CD8-positive, alpha-beta T cell (primary cell): ENCODE measurements at regions of chr3 and their contacts with region 1.

Region 1: DNA sequence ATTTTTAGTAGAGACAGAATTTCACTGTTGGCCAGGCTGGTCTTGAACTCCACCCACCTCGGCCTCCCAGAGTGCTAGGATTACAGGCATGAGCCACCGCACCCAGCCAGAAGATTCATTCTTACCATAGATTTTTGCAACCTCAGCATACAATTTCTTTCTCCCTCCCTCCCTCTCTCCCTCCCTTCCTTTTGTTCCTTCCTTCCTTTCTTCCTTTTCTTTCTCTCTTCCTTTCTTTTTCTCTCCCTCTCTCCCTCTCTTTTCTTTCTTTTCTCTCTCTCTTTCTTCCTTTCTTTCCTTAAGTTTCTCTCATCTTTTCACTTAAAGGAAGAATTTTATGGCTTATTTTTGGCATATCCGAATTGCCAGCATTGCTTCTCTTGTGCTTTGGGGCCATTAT is 58.0 kb downstream of the PRKAR2A start:
- DNase-seq: no peak
- ATAC-seq: no peak
- H3K4me3 ChIP-seq: no peak overlapping the region
- H3K4me3 Mint-ChIP-seq: no peak overlapping the region
- H3K27ac ChIP-seq: no peak overlapping the region
- H3K27ac Mint-ChIP-seq: no peak overlapping the region
- H3K4me1 ChIP-seq: peaks cover 9% of the 10 kb centered on the region
- H3K4me1 Mint-ChIP-seq: peaks cover 19% of the 10 kb centered on the region
- H3K27me3 ChIP-seq: no peaks in the 10 kb centered on the region
- H3K27me3 Mint-ChIP-seq: no peaks in the 10 kb centered on the region
- CTCF ChIP-seq: no peak

Region 2: GRCh38 chr3:48811524-48811923 is 21.9 kb after region 1 on chr3:
- CTCF ChIA-PET with region 1: no interaction called
- POLR2A ChIA-PET with region 1: no interaction called
- intact Hi-C with region 1: loop called in 1 of 2 experiments (anchors 2 kb)
- DNase-seq: no peak
- ATAC-seq: no peak
- H3K4me3 ChIP-seq: no peak overlapping the region
- H3K4me3 Mint-ChIP-seq: no peak overlapping the region
- H3K27ac ChIP-seq: peak overlapping the region; percentile 15 to 89
- H3K27ac Mint-ChIP-seq: peak overlapping the region; percentile 23
- H3K4me1 ChIP-seq: peaks cover 14% of the 10 kb centered on the region
- H3K4me1 Mint-ChIP-seq: peaks cover 35% of the 10 kb centered on the region
- H3K27me3 ChIP-seq: no peaks in the 10 kb centered on the region
- H3K27me3 Mint-ChIP-seq: no peaks in the 10 kb centered on the region
- CTCF ChIP-seq: no peak